SK-N-SH (cell line): ENCODE measurements at regions of chrX and their contacts with region 1.

Region 1: GRCh38 chrX:112664924-112665323 is 14.8 kb downstream of the LHFPL1 start:
- DNase-seq: no peak
- H3K4me3 ChIP-seq: no peak overlapping the region
- H3K27ac ChIP-seq: no peak overlapping the region
- H3K4me1 ChIP-seq: no peaks in the 10 kb centered on the region
- H3K27me3 ChIP-seq: no peaks in the 10 kb centered on the region; the same call in none of the 2 replicates
- CTCF ChIP-seq: no peak
- EP300 ChIP-seq: no peak
- RAD21 ChIP-seq: no peak

Region 2: GRCh38 chrX:112642349-112642748 is 22.6 kb before region 1 on chrX:
- CTCF ChIA-PET with region 1: interaction called, 13 read pairs
- POLR2A ChIA-PET with region 1: no interaction called
- DNase-seq: peak; percentile 39
- H3K4me3 ChIP-seq: no peak overlapping the region; a peak in 1 of 4 replicates
- H3K27ac ChIP-seq: no peak overlapping the region
- H3K4me1 ChIP-seq: no peaks in the 10 kb centered on the region
- H3K27me3 ChIP-seq: no peaks in the 10 kb centered on the region
- CTCF ChIP-seq: peak; percentile 78
- EP300 ChIP-seq: no peak
- RAD21 ChIP-seq: peak; percentile 80

Region 3: DNA sequence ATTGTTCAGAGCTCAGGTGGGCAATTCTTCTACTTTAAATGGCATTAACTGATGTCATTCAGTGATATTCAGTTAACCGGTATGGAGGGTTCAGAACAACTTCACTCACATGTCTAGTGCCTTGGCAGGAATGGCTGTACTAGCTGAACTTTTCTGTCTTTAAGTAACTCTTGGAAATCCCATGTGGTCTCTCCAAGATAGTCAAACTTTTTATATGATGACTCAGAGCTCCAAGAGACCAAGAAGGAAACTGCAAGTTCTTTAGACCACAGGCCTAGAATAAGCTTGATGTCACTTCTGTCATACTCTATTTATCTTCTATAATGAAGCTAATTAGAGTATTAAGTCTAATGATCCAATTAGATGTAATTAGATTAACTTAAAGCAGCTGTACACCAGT is 10.1 kb before region 1 on chrX:
- CTCF ChIA-PET with region 1: no interaction called
- POLR2A ChIA-PET with region 1: no interaction called
- DNase-seq: no peak
- H3K4me3 ChIP-seq: no peak overlapping the region
- H3K27ac ChIP-seq: no peak overlapping the region
- H3K4me1 ChIP-seq: no peaks in the 10 kb centered on the region
- H3K27me3 ChIP-seq: no peaks in the 10 kb centered on the region
- CTCF ChIP-seq: no peak
- EP300 ChIP-seq: no peak
- RAD21 ChIP-seq: no peak

Region 4: GRCh38 chrX:112678831-112679230 is 13.9 kb after region 1 on chrX:
- CTCF ChIA-PET with region 1: no interaction called
- POLR2A ChIA-PET with region 1: no interaction called
- DNase-seq: no peak
- H3K4me3 ChIP-seq: no peak overlapping the region
- H3K27ac ChIP-seq: no peak overlapping the region
- H3K4me1 ChIP-seq: no peaks in the 10 kb centered on the region
- H3K27me3 ChIP-seq: no peaks in the 10 kb centered on the region
- CTCF ChIP-seq: no peak
- EP300 ChIP-seq: no peak
- RAD21 ChIP-seq: no peak

Region 5: DNA sequence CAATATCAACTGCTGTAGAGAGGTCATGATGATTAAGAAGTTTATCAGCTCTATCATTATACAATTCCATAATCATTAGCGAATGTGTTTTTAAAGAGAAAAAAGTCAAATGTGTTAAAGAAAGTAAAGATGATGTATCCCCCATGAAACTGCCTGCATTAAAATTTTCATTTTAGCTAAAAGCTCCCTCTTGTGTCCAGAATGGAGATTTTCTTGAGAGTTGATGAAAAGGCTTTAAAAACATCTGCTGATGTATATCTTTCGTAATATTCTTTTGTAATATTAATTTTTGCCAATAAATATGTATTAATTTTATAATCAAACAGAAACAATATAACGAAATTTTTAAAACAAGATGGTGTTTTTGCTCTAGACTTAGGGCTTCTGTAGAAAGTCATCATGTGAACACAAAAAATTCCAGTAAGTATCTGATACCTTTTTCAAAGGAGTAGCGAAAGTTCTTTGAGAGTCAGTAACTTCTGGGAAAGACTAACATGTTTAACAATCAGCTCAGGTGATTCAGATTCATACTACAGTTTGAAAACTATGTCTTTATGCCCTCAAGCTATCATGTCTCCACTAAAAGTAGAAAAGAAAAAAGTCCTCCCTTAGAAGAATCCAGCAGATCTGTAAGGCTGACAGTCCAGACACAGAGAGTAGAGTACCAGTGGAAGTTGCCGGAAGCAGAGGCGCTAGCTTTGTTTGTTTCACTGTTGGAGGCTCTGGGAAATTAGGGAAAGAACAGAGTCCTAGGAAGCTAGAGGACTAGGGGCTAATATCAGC is 67.1 kb after region 1 on chrX:
- CTCF ChIA-PET with region 1: no interaction called
- POLR2A ChIA-PET with region 1: no interaction called
- DNase-seq: no peak
- H3K4me3 ChIP-seq: no peak overlapping the region
- H3K27ac ChIP-seq: no peak overlapping the region
- H3K4me1 ChIP-seq: no peaks in the 10 kb centered on the region
- H3K27me3 ChIP-seq: no peaks in the 10 kb centered on the region
- CTCF ChIP-seq: peak; percentile 59
- EP300 ChIP-seq: no peak
- RAD21 ChIP-seq: peak; percentile 42; the same call in 1 of the 2 replicates